ACHN (cell line): ENCODE measurements at regions of chr6 and their contacts with region 1.

Region 1: GRCh38 chr6:110528101-110528929 is 51.9 kb upstream of the SLC22A16 start:
- DNase-seq: peak; percentile 63

Region 2: GRCh38 chr6:110999634-111000270 is 471.4 kb after region 1 on chr6:
- in situ Hi-C with region 1: loop called (anchors 25 kb)
- DNase-seq: peak; percentile 42